ENCODE measurements at regions of chr16 and their contacts with region 1.

Region 1: GRCh38 chr16:85536411-85537330 is 76.5 kb upstream of the GSE1 start:
- DNase-seq: no peak
- ATAC-seq: no peak
- H3K4me3 Mint-ChIP-seq: no peak overlapping the region
- H3K27ac Mint-ChIP-seq: no peak overlapping the region
- H3K4me1 Mint-ChIP-seq: peaks cover 14% of the 10 kb centered on the region
- H3K27me3 Mint-ChIP-seq: peaks cover 5% of the 10 kb centered on the region; the same call in 1 of the 2 replicates
- CTCF ChIP-seq: no peak

Region 2: GRCh38 chr16:85498273-85499006 is 38.2 kb before region 1 on chr16:
- CTCF ChIA-PET with region 1: no interaction called
- POLR2A ChIA-PET with region 1: no interaction called
- DNase-seq: no peak
- ATAC-seq: no peak
- H3K4me3 Mint-ChIP-seq: no peak overlapping the region
- H3K27ac Mint-ChIP-seq: no peak overlapping the region
- H3K4me1 Mint-ChIP-seq: no peaks in the 10 kb centered on the region
- H3K27me3 Mint-ChIP-seq: no peaks in the 10 kb centered on the region
- CTCF ChIP-seq: no peak

Region 3: GRCh38 chr16:85514595-85515318 is 21.9 kb before region 1 on chr16:
- CTCF ChIA-PET with region 1: interaction called, 10 read pairs
- POLR2A ChIA-PET with region 1: no interaction called
- DNase-seq: no peak
- ATAC-seq: no peak
- H3K4me3 Mint-ChIP-seq: no peak overlapping the region
- H3K27ac Mint-ChIP-seq: peak overlapping the region; percentile 72; the same call in 1 of the 2 replicates
- H3K4me1 Mint-ChIP-seq: peaks cover 22% of the 10 kb centered on the region
- H3K27me3 Mint-ChIP-seq: no peaks in the 10 kb centered on the region
- CTCF ChIP-seq: no peak

Region 4: DNA sequence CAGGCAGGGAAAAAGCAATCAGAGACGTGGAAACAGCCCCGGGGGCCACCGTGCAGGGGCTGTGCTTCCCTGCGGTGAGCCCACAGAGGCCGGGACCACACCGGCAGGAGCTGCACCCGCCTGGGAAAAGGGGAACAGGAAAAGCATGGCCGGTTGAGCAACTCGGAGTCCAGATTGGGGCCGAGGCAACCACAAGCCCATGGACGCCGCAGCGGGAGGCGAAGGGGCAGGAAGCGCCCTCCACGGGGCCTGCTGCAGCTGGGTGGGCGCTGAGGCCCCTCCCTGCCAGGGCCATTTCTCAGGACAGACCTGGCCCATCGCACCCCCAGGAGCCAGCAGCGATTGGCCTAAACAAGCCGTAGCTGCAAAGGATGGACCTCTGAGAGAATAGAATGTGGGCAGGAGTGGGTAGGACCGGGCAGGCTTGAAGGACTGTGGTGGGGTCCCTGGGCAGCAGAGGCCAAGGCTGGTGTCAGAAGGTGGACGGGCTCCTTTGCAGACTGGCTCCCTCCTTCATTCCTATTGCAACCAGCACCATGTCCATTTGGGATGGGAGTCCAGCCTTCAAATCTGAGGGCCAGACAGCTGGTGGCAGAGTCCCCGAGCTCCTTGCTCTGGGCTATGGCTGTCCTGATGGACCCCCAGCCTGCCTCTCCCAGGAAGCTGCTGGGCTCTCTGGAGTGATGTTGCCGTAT is 293.2 kb after region 1 on chr16:
- CTCF ChIA-PET with region 1: no interaction called
- POLR2A ChIA-PET with region 1: no interaction called
- DNase-seq: no peak
- ATAC-seq: no peak
- H3K4me3 Mint-ChIP-seq: no peak overlapping the region
- H3K27ac Mint-ChIP-seq: no peak overlapping the region
- H3K4me1 Mint-ChIP-seq: no peaks in the 10 kb centered on the region
- H3K27me3 Mint-ChIP-seq: peaks cover 12% of the 10 kb centered on the region
- CTCF ChIP-seq: no peak